PC-9 (cell line): ENCODE measurements at regions of chr5 and their contacts with region 1.

Region 1: DNA sequence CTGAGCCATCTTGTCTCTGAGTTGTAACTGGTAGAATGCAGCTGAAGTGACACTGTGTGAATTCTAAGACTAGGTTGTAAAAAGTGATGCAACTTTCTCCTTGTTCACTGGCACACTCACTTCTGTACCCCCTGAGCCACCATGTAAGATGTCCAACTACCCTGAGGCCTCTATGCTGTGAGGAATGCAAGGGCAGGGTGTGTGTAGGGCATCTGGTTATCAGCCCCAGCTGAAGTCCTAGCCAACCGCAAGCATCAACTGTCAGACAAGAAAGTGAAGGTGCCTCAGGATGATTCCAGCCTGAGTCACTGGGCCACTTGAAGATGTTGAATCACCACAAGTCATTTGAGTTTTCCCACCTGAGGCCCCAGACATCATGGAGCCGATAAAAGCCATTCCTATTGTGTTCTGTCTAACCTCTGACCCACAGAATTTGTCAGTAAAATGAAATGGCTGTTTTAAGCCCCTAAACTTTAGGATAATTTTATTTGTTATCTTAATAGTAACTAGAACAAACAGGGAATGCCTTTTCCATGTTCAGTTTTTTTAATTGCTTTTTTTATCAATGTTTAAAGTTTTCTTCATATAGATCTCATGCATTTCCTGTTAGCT is 18.7 kb upstream of the RHOBTB3 start:
- DNase-seq: peak; percentile 86 to 99
- H3K4me3 ChIP-seq: no peak overlapping the region
- H3K27ac ChIP-seq: peak overlapping the region; percentile 74
- H3K4me1 ChIP-seq: peaks cover 47% of the 10 kb centered on the region
- H3K27me3 ChIP-seq: no peaks in the 10 kb centered on the region
- CTCF ChIP-seq: no peak

Region 2: GRCh38 chr5:95664204-95664786 is 48.2 kb before region 1 on chr5:
- CTCF ChIA-PET with region 1: no interaction called
- POLR2A ChIA-PET with region 1: no interaction called
- intact Hi-C with region 1: loop called (anchors 5 kb)
- DNase-seq: peak in 1 of 2 experiments; percentile 7
- H3K4me3 ChIP-seq: no peak overlapping the region
- H3K27ac ChIP-seq: no peak overlapping the region
- H3K4me1 ChIP-seq: 0 out of 2 replicates have a peak, but pooled peaks cover 10% of the 10 kb centered on the region
- H3K27me3 ChIP-seq: no peaks in the 10 kb centered on the region
- CTCF ChIP-seq: peak; percentile 90

Region 3: DNA sequence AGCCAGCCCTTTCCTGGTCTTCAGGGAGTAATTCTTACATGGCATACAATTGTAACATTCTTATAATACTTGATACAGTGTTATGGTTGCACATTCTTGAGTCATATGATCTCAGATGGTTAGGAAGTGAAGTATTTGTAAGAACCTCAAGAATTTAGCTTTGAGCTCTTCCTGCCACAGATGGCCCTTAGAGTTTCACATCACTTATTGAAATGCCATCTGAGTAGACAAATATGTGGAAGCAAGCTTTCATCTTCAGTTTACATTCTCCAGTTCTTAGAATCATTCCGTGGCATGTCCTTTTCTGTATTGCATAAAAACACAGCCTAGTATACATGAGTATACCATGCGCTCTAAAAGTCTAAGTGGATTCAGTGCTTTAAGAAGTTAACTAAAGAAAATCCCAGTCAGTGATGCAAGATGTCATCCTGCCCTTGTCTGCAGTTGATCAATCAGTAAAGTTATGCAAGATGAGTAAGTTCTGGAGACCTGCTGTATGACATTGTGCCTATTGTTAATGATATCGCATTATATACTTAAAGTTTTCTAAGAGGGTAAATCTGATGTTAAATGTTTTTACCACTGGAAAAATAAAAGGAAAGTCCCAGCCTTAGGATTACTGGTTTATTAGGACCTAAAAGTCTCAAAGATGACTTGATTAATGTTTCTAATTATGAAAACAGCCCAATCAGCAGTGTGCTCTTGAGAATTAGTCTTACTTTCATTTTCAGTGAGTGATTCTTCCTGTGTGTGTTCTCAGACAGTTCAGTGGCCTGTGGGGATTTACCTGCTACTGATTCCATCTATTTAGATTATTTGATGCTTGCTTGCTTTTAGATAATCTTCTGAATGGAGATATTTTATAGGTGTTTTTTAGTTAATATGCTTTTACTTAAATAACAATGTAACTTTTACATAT is 48.1 kb after region 1 on chr5:
- CTCF ChIA-PET with region 1: no interaction called
- POLR2A ChIA-PET with region 1: no interaction called
- intact Hi-C with region 1: loop called (anchors 1 kb)
- DNase-seq: peak; percentile 6 to 69
- H3K4me3 ChIP-seq: no peak overlapping the region
- H3K27ac ChIP-seq: peak overlapping the region; percentile 37
- H3K4me1 ChIP-seq: peaks cover 24% of the 10 kb centered on the region; the same call in 1 of the 2 replicates
- H3K27me3 ChIP-seq: no peaks in the 10 kb centered on the region
- CTCF ChIP-seq: no peak

Region 4: GRCh38 chr5:95835682-95836385 is 123.4 kb after region 1 on chr5:
- CTCF ChIA-PET with region 1: no interaction called
- POLR2A ChIA-PET with region 1: no interaction called
- intact Hi-C with region 1: loop called (anchors 5 kb)
- DNase-seq: no peak
- H3K4me3 ChIP-seq: peak overlapping the region; percentile 80; the same call in 1 of the 2 replicates
- H3K27ac ChIP-seq: peak overlapping the region; percentile 54
- H3K4me1 ChIP-seq: peaks cover 42% of the 10 kb centered on the region
- H3K27me3 ChIP-seq: no peaks in the 10 kb centered on the region
- CTCF ChIP-seq: no peak